HCT116 (cell line): ENCODE measurements at regions of chr18 and their contacts with region 1.

Region 1: DNA sequence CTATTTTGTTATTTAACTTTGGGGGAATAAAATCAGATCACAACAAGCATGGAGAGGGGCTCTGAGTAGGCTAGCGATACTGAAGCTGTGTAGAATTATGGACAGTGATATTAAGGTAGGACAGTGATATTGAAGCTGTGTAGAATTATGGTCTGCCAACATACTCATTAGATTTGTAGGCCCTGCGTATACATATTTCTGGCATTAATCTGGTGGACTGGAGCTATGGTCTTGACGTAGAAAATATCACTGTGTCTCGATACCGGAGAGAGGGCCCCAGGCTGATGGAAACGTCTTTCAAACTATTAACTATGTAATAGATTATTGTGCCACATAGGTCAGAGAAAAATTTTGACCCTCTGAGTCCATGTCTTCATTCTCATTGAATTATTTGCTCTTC is 511.4 kb downstream of the ADCYAP1 start:
- DNase-seq: no peak
- ATAC-seq: no peak
- H3K4me3 ChIP-seq: no peak overlapping the region
- H3K27ac ChIP-seq: no peak overlapping the region
- H3K4me1 ChIP-seq: no peaks in the 10 kb centered on the region
- H3K27me3 ChIP-seq: 0 out of 2 replicates have a peak, but pooled peaks cover 7% of the 10 kb centered on the region
- CTCF ChIP-seq: no peak
- POLR2A ChIP-seq: no peak
- RAD21 ChIP-seq: no peak

Region 2: DNA sequence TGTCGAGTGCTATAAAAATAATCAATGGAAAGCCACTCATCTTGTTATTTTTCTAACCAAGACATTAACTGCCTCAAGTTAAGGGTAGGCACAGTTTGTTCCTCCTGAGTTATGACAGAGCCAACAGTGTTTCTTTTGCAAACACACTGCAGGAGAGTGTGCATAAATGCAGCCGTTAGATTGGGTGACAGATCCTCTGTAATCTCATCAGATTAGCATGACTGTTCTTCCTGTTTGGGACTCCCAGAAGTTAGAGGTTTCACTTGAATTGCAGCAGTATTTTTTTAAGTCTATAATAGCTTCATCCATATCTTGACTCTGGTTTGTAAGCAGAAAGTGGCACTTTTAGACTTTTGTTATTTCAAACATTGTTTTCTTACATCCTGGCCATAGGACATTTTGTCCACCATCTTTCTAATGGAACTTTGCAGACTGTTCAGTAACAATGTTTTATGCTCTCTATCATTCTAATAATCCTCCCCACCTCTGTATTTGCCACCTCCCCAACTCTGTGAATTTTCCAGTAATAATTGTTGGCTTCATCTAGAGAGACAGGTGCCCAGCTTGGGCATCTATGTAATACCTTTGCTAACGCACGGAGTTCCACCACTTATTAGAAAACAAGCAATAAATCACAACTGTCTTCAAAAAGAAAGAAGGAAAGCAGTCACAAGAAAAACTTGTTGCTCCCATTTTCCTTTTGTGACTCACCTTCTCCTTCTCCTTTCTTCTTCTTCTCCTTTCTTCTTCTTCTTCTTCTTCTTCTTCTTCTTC is 48.6 kb after region 1 on chr18:
- CTCF ChIA-PET with region 1: no interaction called
- POLR2A ChIA-PET with region 1: no interaction called
- RAD21 ChIA-PET with region 1: no interaction called
- intact Hi-C with region 1: loop called (anchors 5 kb)
- DNase-seq: no peak
- ATAC-seq: no peak
- H3K4me3 ChIP-seq: no peak overlapping the region
- H3K27ac ChIP-seq: no peak overlapping the region
- H3K4me1 ChIP-seq: no peaks in the 10 kb centered on the region
- H3K27me3 ChIP-seq: peaks cover 7% of the 10 kb centered on the region
- CTCF ChIP-seq: no peak
- POLR2A ChIP-seq: no peak
- RAD21 ChIP-seq: no peak